ENCODE measurements at regions of chr15 and their contacts with region 1.

Region 1: DNA sequence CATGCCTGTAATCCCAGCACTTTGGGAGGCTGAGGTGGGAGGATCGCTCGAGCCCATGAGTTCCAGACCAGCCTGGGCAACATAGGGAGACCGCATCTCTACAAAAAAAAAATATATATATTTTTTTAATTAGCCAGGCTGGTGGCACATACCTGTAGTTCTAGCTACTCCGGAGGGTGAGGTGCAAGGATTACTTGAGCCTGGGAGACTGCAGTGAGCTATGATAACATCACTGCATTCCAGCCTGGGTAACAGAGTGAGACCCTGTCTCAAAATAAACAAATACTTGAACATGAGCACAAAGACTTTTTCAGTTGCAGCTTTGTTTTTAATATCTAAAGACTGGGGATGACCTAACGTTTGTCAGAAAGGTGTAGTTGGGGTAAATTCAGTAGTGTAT is 31.3 kb upstream of the GATM start:
- DNase-seq: no peak
- ATAC-seq: no peak
- H3K4me3 ChIP-seq: no peak overlapping the region
- H3K27ac ChIP-seq: no peak overlapping the region
- H3K4me1 ChIP-seq: peaks cover 9% of the 10 kb centered on the region; the same call in 1 of the 2 replicates
- H3K27me3 ChIP-seq: no peaks in the 10 kb centered on the region
- CTCF ChIP-seq: no peak

Region 2: DNA sequence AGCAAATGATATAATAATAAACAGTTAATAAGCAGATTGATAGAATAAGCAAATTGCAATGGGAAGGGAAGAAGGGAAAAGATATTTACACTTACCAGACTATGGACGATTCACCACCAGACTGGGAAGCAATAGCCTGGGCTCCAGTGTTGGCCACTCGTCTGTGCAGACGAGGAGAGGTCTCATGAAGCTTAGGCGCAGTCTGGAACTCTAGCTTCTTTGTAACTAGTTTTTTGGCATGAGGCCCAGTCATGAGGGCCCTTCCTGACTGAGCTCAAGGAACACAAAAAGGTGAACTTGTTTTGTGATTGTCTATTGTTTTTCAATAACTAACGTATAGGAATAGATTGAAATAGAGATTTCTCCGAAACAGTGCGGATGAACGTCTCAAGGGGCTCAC is 32.1 kb after region 1 on chr15:
- CTCF ChIA-PET with region 1: no interaction called
- POLR2A ChIA-PET with region 1: interaction called, 26 read pairs
- intact Hi-C with region 1: no loop called
- DNase-seq: no peak
- ATAC-seq: no peak
- H3K4me3 ChIP-seq: no peak overlapping the region
- H3K27ac ChIP-seq: no peak overlapping the region
- H3K4me1 ChIP-seq: peaks cover 28% of the 10 kb centered on the region
- H3K27me3 ChIP-seq: no peaks in the 10 kb centered on the region
- CTCF ChIP-seq: no peak